Colonic mucosa (tissue), 4 donors: ENCODE measurements at regions of chr12 and their contacts with region 1.

Region 1: GRCh38 chr12:8108808-8109398 is 14.5 kb upstream of the CLEC4A start:
- DNase-seq: peak; percentile 74
- H3K4me3 ChIP-seq: no peak overlapping the region
- H3K27ac ChIP-seq: no peak overlapping the region
- H3K4me1 ChIP-seq: no peaks in the 10 kb centered on the region
- H3K27me3 ChIP-seq: no peaks in the 10 kb centered on the region
- CTCF ChIP-seq: peak; percentile 92

Region 2: DNA sequence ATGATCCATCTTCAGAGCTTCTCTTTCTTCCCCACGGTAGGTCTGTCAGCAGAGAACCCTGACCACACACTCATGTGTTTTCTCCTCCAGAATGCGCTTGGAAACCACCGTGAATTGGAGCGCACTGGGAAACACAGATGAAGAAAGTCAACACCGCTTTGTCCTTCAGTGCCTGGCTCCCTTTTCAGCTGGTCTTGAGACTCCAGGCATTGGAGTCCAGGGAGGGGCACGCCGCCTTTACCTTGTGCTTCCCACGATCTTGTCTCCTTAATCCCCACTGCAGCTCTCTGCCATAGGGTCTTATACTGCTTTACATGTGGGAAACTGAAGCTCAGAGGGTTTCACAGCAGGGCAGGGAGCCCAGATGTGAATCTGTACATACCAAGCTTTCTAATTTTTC is 117.5 kb after region 1 on chr12:
- intact Hi-C with region 1: loop called (anchors 5 kb)
- DNase-seq: no peak
- H3K4me3 ChIP-seq: no peak overlapping the region
- H3K27ac ChIP-seq: no peak overlapping the region
- H3K4me1 ChIP-seq: no peaks in the 10 kb centered on the region
- H3K27me3 ChIP-seq: no peaks in the 10 kb centered on the region
- CTCF ChIP-seq: no peak